Aorta (tissue), 5 donors: ENCODE measurements at regions of chr1 and their contacts with region 1.

Region 1: DNA sequence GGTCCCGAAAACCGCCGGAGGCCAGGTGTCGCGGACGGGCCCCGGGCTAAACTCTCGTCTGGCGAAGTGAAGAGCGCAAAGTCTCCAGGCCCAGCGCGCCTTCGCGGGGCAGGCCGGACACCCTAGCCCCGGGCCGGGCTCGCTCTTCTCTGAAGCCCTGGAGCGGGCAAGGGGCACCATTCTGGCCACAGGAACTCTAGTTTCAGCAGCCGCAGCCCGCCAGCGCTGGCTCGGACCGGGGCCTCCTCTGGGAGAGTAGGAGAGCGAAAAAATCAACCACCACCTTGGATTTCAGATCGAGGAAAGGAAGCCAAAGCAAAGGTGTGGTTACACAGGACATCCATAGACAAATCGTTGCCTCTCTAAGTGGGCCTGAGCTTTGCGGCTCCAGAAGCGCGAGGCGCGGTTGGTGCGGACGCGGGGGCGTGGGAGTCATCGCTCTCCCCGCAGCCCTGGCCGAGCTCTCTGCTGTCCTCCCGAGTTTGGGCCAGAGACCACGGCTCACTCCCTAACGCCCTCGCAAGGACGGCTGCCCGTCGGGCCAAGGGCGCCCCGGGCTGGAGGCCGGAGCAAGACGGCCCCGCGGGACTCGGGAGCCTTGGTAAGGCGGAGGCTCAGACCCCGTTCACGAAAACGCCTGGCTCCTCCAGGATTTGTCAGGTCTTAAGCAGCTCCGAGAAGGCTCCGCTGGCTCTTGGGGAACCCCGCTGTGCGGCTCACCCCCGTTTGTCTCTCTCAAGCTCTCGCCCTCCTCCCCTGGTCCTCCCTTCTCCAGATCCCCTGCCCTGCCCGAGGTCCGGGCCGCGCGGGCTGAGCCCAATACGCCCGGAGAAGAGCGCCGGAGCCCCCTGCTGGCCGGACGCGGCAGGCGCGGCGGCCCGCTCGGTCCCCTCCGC is 132.9 kb upstream of the DPYD start:
- DNase-seq: peak; percentile 70 to 88
- ATAC-seq: peak; percentile 94
- H3K4me3 ChIP-seq: peak overlapping the region in 1 of 2 donors; percentile 4
- H3K27ac ChIP-seq: no peak overlapping the region
- H3K4me1 ChIP-seq: no peaks in the 10 kb centered on the region
- H3K27me3 ChIP-seq: no peaks in the 10 kb centered on the region

Region 2: DNA sequence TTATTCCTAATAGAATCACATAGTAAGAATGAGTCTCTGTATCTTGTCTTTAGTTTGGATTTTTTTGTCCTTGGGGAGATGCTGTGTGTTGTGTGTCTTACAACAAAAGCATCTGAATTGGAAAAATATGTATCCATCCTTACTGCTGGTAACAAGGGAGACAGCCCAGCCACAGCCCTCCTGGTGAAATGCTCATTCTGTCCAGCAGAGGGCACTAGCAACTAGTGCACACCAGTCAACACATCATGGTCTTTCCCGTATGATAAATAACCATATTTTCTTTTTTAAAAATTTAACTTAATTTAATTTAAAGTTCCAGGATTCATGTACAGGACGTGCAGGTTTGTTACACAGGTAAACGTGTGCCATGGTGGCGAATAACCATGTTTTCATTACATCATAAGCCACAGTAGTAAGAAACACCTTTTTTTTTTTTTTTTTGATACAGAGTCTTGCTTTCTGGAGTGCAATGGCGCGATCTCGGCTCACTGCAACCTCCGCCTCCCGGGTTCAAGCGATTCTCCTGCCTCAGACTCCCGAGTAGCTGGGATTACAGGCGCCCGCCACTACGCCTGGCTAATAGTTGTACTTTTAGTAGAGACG is 1087.1 kb before region 1 on chr1:
- intact Hi-C with region 1: loop called (anchors 5 to 10 kb)
- DNase-seq: peak; percentile 78 to 84
- ATAC-seq: peak; percentile 84
- H3K4me3 ChIP-seq: no peak overlapping the region
- H3K27ac ChIP-seq: no peak overlapping the region
- H3K4me1 ChIP-seq: peaks cover 1 to 4% of the 10 kb centered on the region in 2 donors
- H3K27me3 ChIP-seq: no peaks in the 10 kb centered on the region

Region 3: DNA sequence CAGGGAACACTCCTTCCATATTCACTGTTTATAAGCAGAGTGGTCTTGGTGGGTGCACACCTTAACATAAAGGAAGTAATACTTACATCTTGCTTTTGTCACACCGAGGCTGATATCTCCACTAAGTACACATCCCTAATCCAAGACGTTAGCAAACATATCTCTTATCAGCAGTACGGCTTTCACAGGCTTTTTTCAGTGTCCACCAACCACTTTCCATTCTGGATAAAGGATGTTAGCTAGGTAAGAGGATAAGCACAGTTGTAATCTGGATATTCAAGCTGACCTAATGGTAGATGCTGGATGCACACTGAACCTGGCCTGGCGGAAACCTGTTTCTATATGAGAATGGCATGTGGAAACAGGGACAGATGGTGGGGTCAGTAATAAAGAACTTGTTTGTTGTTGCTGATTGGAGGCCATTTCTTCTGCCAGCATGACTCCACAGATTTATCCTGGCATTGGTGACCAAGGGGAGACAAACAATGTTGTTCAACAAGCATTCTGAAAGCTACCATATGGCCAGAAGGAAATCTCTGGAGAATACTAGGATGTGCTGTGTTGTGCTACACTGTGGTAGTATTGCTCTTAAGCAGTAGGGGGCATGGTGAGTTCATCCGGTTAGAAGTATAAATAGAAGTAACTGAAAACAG is 915.7 kb before region 1 on chr1:
- intact Hi-C with region 1: loop called in 1 of 2 experiments (anchors 10 kb)
- DNase-seq: no peak
- ATAC-seq: peak; percentile 59
- H3K4me3 ChIP-seq: no peak overlapping the region
- H3K27ac ChIP-seq: no peak overlapping the region
- H3K4me1 ChIP-seq: no peaks in the 10 kb centered on the region
- H3K27me3 ChIP-seq: no peaks in the 10 kb centered on the region